ENCODE measurements at regions of chr5 and their contacts with region 1.

Region 1: GRCh38 chr5:55278778-55279177 is 28.7 kb downstream of the DHX29 start:
- DNase-seq: no peak
- H3K4me3 ChIP-seq: no peak overlapping the region
- H3K4me3 Mint-ChIP-seq: no peak overlapping the region
- H3K27ac Mint-ChIP-seq: no peak overlapping the region
- H3K4me1 ChIP-seq: no peaks in the 10 kb centered on the region
- H3K4me1 Mint-ChIP-seq: no peaks in the 10 kb centered on the region
- H3K27me3 ChIP-seq: no peaks in the 10 kb centered on the region
- H3K27me3 Mint-ChIP-seq: no peaks in the 10 kb centered on the region
- CTCF ChIP-seq: no peak

Region 2: GRCh38 chr5:55232985-55233928 is 45.5 kb before region 1 on chr5 and contains the start of gene CCNO:
- CTCF ChIA-PET with region 1: no interaction called
- POLR2A ChIA-PET with region 1: no interaction called
- intact Hi-C with region 1: loop called (anchors 5 kb)
- DNase-seq: peak; percentile 84 to 85
- H3K4me3 ChIP-seq: peak within 1 kb of the TSS; percentile 57
- H3K4me3 Mint-ChIP-seq: peak within 1 kb of the TSS; percentile 90
- H3K27ac Mint-ChIP-seq: peak within 1 kb of the TSS; percentile 53
- H3K4me1 ChIP-seq: peaks cover 7% of the 10 kb centered on the region
- H3K4me1 Mint-ChIP-seq: peaks cover 3% of the 10 kb centered on the region
- H3K27me3 ChIP-seq: peaks cover 4% of the 10 kb centered on the region
- H3K27me3 Mint-ChIP-seq: no peaks in the 10 kb centered on the region
- CTCF ChIP-seq: peak in 1 of 2 experiments; percentile 1
- total RNA-seq, gene CCNO: 3.1 and 3.9 TPM in 2 replicates

Measured in Caco-2 (cell line).